Dorsolateral prefrontal cortex (tissue), 120 donors: ENCODE measurements at regions of chr10 and their contacts with region 1.

Region 1: DNA sequence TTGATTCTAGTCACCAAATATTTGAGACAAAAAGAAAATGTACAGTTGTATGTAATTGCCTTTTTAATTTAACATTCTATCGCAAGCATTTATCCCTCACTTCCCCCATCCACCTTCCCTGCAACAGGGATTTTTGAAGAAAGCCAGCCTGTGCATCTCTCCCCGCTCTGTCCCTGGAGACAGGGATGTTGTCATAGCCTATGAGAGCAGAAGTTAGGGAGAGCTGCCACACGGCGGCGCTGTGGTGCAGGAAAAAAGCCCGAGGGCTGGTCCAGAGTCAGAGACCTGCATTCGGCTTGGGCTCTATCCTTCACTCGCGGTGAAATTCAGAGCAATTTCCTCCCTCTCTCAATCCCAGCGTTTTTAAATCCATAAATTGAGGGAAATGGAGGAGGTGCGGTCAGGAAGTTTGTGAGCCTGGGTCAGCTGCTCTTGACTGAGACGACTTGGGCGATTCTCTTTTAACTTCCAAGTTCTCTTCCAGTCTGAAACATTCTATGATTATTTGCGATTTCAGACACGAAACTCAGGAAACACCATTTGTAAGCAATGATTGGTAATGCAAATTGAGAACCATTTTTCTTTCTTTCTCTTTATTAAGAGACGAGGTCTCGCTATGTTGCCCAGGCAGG is 17.5 kb downstream of the HKDC1 start:
- DNase-seq: peak; percentile 81 to 94 (median 91)
- H3K4me3 ChIP-seq: peak overlapping the region in 5 of 59 donors; percentile 2 to 25 (median 15)
- H3K27ac ChIP-seq: peak overlapping the region in 1 of 59 donors; percentile 44
- H3K27me3 ChIP-seq: peaks cover 0 to 3% (median 0%) of the 10 kb centered on the region in 45 donors
- CTCF ChIP-seq: peak; percentile 84 to 100 (median 97)

Region 2: DNA sequence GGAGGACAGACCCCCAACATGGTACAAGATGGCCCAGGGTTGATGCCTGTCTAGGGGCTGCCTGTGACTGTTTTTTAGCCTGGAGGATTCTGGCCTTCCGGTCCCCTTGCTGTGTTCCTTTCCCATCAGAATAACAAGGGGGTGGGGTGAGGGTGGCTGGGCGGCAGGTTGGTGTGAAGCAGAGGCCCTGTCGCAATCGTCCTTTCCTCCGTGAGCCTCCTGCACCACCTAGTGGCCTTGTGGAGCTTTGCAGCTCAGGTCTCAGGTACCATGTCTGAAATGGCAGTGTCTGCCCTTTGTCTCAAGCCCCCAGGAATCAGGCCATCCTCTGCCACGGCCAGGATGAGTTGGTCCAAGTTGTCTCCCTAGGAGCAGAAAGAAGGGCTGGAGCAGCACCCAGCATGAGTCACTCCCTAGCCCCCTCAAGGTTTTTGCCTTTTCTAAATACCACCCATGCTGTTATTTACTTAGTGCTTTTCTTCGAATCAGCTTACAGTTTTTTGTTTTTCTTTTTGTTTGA is 154.9 kb after region 1 on chr10:
- intact Hi-C with region 1: loop called (anchors 1 kb)
- DNase-seq: peak; percentile 72 to 90 (median 84)
- H3K4me3 ChIP-seq: no peak overlapping the region
- H3K27ac ChIP-seq: peak overlapping the region in 14 of 59 donors; percentile 13 to 59 (median 28)
- H3K27me3 ChIP-seq: peaks cover 0 to 3% (median 0%) of the 10 kb centered on the region in 45 donors
- CTCF ChIP-seq: peak; percentile 77 to 98 (median 94)

Region 3: DNA sequence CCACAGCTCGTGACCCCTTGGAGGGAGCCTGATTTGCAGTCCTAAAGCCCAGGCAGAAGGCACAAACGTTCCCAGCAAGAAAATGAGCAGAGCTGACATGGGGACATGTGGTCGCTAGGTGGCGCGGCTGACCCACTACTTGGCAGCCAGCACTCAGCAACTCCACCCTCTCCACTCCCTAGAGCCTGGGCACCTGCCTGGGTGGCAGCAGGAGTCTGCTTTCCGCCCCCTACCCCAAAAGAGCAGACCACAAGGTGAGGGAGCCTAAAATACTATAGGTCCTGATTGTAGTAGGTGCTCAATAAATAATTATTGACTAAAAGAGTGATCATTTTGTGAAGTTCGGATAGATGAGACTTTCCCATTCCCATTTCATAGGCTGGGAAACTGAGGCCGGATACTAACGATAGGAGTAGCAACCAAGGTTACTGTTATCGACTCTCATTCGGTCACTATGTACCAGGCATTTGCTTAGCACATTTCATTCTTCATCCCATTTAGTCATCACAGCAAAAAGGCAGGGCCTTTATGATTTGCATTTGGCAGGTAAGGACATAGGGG is 278.1 kb after region 1 on chr10:
- intact Hi-C with region 1: loop called in 1 of 2 experiments (anchors 10 kb)
- DNase-seq: peak in 8 of 10 donors; percentile 56 to 80 (median 75)
- H3K4me3 ChIP-seq: no peak overlapping the region
- H3K27ac ChIP-seq: no peak overlapping the region
- H3K27me3 ChIP-seq: no peaks in the 10 kb centered on the region
- CTCF ChIP-seq: peak; percentile 27 to 80 (median 67)